Pancreas (tissue), 10 donors: ENCODE measurements at regions of chr10 and their contacts with region 1.

Region 1: DNA sequence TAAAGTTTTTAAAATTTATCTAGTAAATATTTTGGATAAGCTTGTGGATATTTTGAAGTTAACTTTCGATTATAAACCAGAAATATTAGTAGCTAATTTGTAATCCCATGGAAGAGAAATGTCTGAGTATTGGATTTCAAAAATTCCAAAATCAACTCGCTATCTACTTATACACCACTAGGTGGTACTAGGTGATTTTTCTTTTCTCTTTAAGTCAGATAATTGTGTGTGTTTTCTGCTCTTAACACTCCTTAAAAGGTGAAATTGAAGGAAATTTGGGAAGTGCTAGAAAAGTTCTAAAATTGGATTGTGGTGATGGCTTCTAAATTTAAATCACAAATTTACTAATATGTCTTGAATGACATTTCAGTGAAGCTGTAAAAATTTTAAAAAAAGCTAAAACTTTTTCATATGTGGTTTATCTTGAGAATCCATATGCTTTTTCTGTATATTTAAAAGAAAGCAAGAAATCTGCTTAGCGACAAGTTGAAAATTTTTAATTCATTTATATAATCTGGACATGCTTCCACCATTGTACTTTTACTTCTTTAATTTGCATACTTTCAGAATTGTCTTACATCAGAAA is 90.2 kb downstream of the IPMK start:
- DNase-seq: no peak
- ATAC-seq: peak in 3 of 4 donors; percentile 76 to 86 (median 81)
- H3K4me3 ChIP-seq: no peak overlapping the region
- H3K27ac ChIP-seq: no peak overlapping the region
- H3K4me1 ChIP-seq: no peaks in the 10 kb centered on the region
- H3K27me3 ChIP-seq: no peaks in the 10 kb centered on the region
- CTCF ChIP-seq: peak; percentile 33 to 46 (median 44)

Region 2: DNA sequence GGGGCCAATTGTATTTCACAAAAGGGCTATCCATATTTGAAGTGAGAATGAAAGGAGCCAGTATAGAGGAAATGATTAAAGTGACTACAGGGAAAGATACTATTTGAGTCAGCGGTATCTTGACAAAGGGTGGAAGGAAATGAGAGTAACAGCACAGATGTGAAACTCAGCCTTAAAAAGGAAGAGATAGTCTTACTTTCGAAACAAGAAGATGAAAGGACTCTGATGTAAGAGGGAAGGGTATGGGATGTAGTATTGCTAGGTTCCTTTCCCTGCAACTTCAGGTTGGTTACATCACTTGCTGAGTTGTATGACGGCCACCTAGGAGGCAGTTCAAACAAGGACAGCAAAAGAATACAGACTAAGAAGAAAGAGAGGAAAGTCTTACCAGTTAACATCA is 105.2 kb after region 1 on chr10:
- intact Hi-C with region 1: loop called in 1 of 3 experiments (anchors 10 kb)
- DNase-seq: no peak
- ATAC-seq: peak in 2 of 4 donors; percentile 50 to 51
- H3K4me3 ChIP-seq: no peak overlapping the region
- H3K27ac ChIP-seq: no peak overlapping the region
- H3K4me1 ChIP-seq: peaks cover 0 to 8% (median 5%) of the 10 kb centered on the region in 3 donors
- H3K27me3 ChIP-seq: no peaks in the 10 kb centered on the region
- CTCF ChIP-seq: no peak

Region 3: GRCh38 chr10:58291538-58292174 is 114.2 kb after region 1 on chr10:
- intact Hi-C with region 1: loop called (anchors 5 to 10 kb)
- DNase-seq: peak in 3 of 6 donors; percentile 19 to 36 (median 21)
- ATAC-seq: peak; percentile 63 to 96 (median 92)
- H3K4me3 ChIP-seq: no peak overlapping the region
- H3K27ac ChIP-seq: no peak overlapping the region
- H3K4me1 ChIP-seq: no peaks in the 10 kb centered on the region
- H3K27me3 ChIP-seq: no peaks in the 10 kb centered on the region
- CTCF ChIP-seq: peak in 3 of 4 donors; percentile 45 to 63 (median 53)